ENCODE measurements at regions of chr12 and their contacts with region 1.

Region 1: DNA sequence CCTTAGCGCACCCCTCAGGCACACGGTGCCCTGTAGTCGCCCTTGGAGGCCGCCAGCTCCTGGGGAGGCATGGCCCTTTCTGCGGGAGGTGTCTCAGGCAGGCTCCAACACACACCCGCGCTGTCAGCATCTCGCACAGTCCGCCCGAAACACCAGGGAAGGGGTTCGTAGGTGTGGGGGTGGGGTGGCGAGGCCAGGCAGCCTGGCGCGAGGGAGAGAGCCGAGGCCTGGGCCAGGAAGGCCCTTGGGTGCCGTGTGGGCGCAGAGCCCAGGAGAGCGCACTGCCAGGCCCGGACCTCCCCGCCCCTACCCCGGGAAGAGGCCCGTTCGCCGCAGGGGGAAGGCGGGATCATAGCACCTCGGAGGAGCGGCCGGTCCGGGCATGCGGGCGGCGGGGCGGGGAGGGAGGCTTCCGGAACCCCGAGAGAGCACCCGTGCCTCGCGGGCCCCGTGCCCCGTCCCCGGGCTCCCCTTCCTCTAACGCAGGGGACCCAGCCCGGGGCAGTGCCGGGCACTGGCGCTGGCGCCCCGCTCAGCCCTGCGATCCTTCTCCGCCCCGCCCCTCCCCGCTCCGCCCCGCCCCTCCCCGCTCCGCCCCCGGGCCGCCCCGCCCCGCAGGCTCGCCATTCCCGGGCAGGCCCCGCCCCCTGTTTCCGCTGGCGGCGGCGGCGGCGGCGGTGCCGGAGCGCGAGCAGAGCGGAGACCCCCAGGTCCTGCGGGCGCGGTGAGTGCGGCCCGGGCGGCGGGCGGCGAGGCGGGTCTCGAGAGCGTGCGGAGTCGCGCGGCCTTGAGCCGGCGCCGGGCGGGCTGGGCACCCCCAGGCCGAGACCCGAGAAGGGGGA is at the start of gene TSPAN9:
- DNase-seq: peak; percentile 63
- total RNA-seq, gene TSPAN9: 18.8 and 19.1 TPM in 2 replicates

Region 2: DNA sequence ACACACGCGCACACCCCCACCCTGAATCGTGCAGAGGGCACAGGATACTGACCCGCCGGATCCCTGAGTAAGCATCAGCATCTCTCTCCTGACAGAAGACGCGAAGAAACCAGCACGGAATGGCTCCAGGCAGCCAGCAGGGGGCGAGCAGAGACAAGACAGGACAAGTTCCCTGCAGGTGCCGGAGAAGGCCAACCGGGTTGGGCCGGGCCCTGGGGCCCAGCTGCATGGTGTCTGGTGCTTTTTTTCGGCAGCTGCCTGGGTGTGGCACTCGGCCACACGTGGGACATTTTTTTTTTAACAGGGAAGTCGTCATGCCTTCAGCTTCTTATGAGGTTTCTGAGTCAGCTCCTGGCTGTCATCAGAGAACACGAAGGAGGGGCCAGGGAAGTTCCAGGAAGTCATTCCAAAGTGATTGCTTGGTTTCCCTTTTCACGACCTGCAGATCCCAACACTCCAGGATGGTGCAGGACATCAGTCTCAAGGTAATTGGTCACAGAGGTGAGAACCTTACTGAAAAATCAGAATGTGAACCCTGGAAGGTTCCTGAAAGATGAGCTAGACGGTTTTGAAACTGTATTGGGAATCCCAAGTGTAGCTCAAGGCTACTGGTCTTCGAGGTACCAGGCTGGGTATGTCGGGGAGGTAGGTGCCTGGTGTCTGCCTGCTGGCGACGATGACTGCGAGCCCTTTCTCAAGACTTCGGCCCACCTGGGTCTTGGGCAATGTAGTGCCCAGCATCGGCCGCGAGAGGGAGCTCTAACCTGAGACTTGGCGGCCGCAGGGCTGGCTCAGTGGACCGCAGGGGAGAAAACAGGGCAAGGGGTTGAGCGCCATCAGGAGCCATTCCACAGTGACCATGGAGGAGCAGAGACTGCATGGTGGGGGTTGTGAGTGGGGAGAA is 223.2 kb after region 1 on chr12:
- in situ Hi-C with region 1: loop called (anchors 25 kb)
- DNase-seq: peak; percentile 90

Measured in G401 (cell line).